ENCODE measurements at regions of chr12 and their contacts with region 1.

Region 1: DNA sequence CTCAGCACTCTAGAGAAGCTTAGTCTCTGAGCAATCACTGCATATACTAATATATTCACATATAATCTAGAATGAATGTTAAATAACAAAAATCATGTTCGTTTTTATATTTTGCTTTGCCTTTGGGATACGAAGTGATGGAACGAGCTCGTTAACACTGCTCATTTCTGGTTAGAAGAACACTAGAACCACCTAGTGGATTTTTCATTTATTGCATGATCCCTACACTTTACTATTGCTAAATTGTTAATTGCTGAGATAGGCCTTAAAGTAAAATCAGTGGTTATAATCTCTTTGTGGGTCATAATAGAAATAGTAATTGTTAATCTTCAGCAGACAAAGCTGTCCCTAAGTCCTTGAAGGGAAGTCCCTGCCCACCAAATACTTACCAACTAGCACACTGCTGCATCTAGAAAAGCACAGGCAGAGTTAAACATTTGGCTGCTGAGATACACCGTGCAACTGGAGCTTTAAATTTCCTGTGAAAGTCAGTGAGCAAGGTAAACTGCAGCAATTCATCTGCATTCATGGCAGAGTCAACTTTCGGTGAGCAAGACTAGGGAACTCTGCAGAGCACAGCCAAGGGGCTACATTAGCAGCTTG is 353.7 kb downstream of the APAF1 start:
- DNase-seq: peak in 1 of 2 experiments; percentile 51
- H3K4me3 ChIP-seq: no peak overlapping the region
- H3K4me3 Mint-ChIP-seq: no peak overlapping the region
- H3K27ac Mint-ChIP-seq: no peak overlapping the region
- H3K4me1 ChIP-seq: no peaks in the 10 kb centered on the region
- H3K4me1 Mint-ChIP-seq: no peaks in the 10 kb centered on the region
- H3K27me3 ChIP-seq: no peaks in the 10 kb centered on the region
- H3K27me3 Mint-ChIP-seq: peaks cover 8% of the 10 kb centered on the region
- CTCF ChIP-seq: peak; percentile 51 to 59

Region 2: DNA sequence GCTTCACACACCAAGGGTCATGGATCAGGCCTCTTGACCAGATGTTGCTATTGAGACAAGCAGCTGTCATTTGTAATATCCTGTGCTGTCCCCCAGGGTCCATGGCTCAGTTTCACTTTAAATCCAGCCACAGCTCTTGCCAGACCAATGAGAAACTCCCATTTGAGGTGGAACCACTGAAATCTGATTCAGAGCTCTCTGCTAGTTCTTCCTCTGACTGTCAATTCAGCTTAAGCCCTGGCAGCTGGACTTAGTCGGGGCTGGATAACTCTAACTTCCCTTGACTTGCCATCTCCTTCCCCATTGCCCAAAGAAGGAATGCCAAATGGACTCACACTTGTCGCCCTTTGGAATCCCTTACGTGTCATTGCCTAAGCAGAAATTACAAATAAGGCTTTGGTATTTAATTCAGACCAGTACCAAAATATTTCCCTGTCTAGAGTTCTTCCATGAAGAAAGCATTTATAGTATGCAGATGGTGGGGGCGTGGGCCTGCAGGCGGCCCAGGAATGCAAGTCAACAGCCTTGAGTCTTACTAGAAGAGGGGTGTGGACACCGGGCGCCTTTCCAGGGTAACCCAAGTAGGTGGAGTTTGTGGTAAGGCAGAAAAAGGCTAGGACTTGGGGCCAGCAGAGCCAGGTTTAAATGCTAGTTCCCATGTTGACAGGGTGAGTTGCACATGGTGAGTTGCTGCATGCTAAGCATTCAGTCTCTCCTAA is 580.3 kb before region 1 on chr12:
- CTCF ChIA-PET with region 1: no interaction called
- POLR2A ChIA-PET with region 1: no interaction called
- intact Hi-C with region 1: loop called (anchors 5 kb)
- DNase-seq: peak; percentile 76 to 84
- H3K4me3 ChIP-seq: no peak overlapping the region
- H3K4me3 Mint-ChIP-seq: no peak overlapping the region
- H3K27ac Mint-ChIP-seq: peak overlapping the region; percentile 45
- H3K4me1 ChIP-seq: peaks cover 17% of the 10 kb centered on the region
- H3K4me1 Mint-ChIP-seq: peaks cover 28% of the 10 kb centered on the region
- H3K27me3 ChIP-seq: no peaks in the 10 kb centered on the region
- H3K27me3 Mint-ChIP-seq: no peaks in the 10 kb centered on the region
- CTCF ChIP-seq: no peak

Region 3: DNA sequence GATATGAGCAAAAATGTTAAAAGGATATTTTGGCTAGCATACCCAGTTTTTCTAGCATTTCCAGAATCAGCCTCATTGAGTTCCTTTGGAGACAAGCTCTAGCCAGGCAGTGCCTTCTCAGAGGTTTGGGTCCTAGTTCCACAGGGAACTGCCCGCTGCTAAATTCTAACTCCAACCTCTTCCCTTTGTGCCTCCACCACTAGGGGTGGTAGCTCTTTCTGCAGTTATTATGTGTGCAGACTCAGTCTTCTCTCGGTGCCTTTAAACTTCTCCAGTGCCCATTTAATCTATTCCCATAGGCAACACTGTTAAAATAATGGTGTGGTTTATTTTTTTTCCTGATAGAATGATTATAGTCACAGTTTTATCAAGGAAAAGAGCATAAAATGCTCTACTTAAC is 426.8 kb before region 1 on chr12:
- CTCF ChIA-PET with region 1: interaction called, 10 read pairs
- POLR2A ChIA-PET with region 1: no interaction called
- intact Hi-C with region 1: no loop called
- DNase-seq: no peak
- H3K4me3 ChIP-seq: no peak overlapping the region
- H3K4me3 Mint-ChIP-seq: no peak overlapping the region
- H3K27ac Mint-ChIP-seq: no peak overlapping the region
- H3K4me1 ChIP-seq: peaks cover 44% of the 10 kb centered on the region
- H3K4me1 Mint-ChIP-seq: no peaks in the 10 kb centered on the region
- H3K27me3 ChIP-seq: no peaks in the 10 kb centered on the region
- H3K27me3 Mint-ChIP-seq: no peaks in the 10 kb centered on the region
- CTCF ChIP-seq: peak; percentile 19 to 27

Region 4: GRCh38 chr12:98698603-98699463 is 300.0 kb before region 1 on chr12:
- CTCF ChIA-PET with region 1: interaction called, 7 read pairs
- POLR2A ChIA-PET with region 1: no interaction called
- intact Hi-C with region 1: loop called (anchors 1 kb)
- DNase-seq: peak; percentile 47 to 54
- H3K4me3 ChIP-seq: no peak overlapping the region
- H3K4me3 Mint-ChIP-seq: no peak overlapping the region
- H3K27ac Mint-ChIP-seq: no peak overlapping the region
- H3K4me1 ChIP-seq: no peaks in the 10 kb centered on the region
- H3K4me1 Mint-ChIP-seq: no peaks in the 10 kb centered on the region
- H3K27me3 ChIP-seq: no peaks in the 10 kb centered on the region
- H3K27me3 Mint-ChIP-seq: no peaks in the 10 kb centered on the region
- CTCF ChIP-seq: peak; percentile 68 to 70

Region 5: GRCh38 chr12:98725476-98726247 is 273.1 kb before region 1 on chr12:
- CTCF ChIA-PET with region 1: interaction called, 7 read pairs
- POLR2A ChIA-PET with region 1: no interaction called
- intact Hi-C with region 1: loop called (anchors 1 kb)
- DNase-seq: peak; percentile 60 to 68
- H3K4me3 ChIP-seq: no peak overlapping the region
- H3K4me3 Mint-ChIP-seq: no peak overlapping the region
- H3K27ac Mint-ChIP-seq: no peak overlapping the region
- H3K4me1 ChIP-seq: no peaks in the 10 kb centered on the region
- H3K4me1 Mint-ChIP-seq: no peaks in the 10 kb centered on the region
- H3K27me3 ChIP-seq: no peaks in the 10 kb centered on the region
- H3K27me3 Mint-ChIP-seq: no peaks in the 10 kb centered on the region
- CTCF ChIP-seq: peak; percentile 51 to 71

Region 6: GRCh38 chr12:98754095-98754494 is 244.7 kb before region 1 on chr12:
- CTCF ChIA-PET with region 1: interaction called, 4 read pairs
- POLR2A ChIA-PET with region 1: no interaction called
- intact Hi-C with region 1: loop called (anchors 5 kb)
- DNase-seq: peak; percentile 57 to 64
- H3K4me3 ChIP-seq: no peak overlapping the region
- H3K4me3 Mint-ChIP-seq: no peak overlapping the region
- H3K27ac Mint-ChIP-seq: no peak overlapping the region
- H3K4me1 ChIP-seq: peaks cover 10% of the 10 kb centered on the region
- H3K4me1 Mint-ChIP-seq: peaks cover 7% of the 10 kb centered on the region
- H3K27me3 ChIP-seq: no peaks in the 10 kb centered on the region
- H3K27me3 Mint-ChIP-seq: peaks cover 7% of the 10 kb centered on the region
- CTCF ChIP-seq: no peak

Region 7: DNA sequence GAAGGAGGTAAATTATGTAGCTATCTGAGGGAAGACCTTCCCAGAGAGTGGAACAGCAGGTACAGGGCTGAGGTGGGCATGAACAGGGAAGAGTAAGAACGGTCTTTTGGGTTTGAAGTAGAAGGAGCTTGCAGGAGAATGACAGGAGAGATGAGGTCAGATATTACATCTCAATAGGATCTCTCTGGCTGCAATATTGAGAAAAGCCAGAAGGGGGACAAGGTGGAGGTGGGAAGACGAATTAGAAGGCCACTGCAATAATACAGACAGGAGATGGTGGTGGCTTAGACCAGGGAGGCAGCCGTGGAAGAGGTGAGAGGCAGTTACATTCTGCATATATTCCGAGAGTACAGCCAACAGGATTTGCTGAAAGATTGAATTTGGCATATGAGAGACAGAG is 43.5 kb before region 1 on chr12:
- CTCF ChIA-PET with region 1: interaction called, 16 read pairs
- POLR2A ChIA-PET with region 1: no interaction called
- intact Hi-C with region 1: loop called (anchors 1 kb)
- DNase-seq: peak in 1 of 2 experiments; percentile 61
- H3K4me3 ChIP-seq: no peak overlapping the region
- H3K4me3 Mint-ChIP-seq: no peak overlapping the region
- H3K27ac Mint-ChIP-seq: no peak overlapping the region
- H3K4me1 ChIP-seq: no peaks in the 10 kb centered on the region
- H3K4me1 Mint-ChIP-seq: no peaks in the 10 kb centered on the region
- H3K27me3 ChIP-seq: no peaks in the 10 kb centered on the region
- H3K27me3 Mint-ChIP-seq: peaks cover 15% of the 10 kb centered on the region
- CTCF ChIP-seq: peak; percentile 56 to 61